Activated T-helper 2 cell treated with anti-CD3 and anti-CD28 coated beads, Interferon-gamma antibody, Interleukin-2, Interleukin-4, amounts not matched to agents 10 μg/mL and 5 μg/mL and 100 μg/mL, durations not matched to agents 14 hours and 24 hours and 36 hours (primary cell): ENCODE measurements at regions of chr4 and their contacts with region 1.

Region 1: GRCh38 chr4:142416711-142417275 is 429.3 kb downstream of the INPP4B start:
- DNase-seq: no peak
- H3K4me3 Mint-ChIP-seq: peak overlapping the region; percentile 76
- H3K27ac Mint-ChIP-seq: peak overlapping the region; percentile 98
- H3K4me1 Mint-ChIP-seq: peaks cover 49% of the 10 kb centered on the region
- H3K27me3 Mint-ChIP-seq: no peaks in the 10 kb centered on the region

Region 2: GRCh38 chr4:142282870-142283431 is 133.8 kb before region 1 on chr4:
- intact Hi-C with region 1: loop called (anchors 5 kb)
- DNase-seq: no peak
- H3K4me3 Mint-ChIP-seq: no peak overlapping the region
- H3K27ac Mint-ChIP-seq: no peak overlapping the region
- H3K4me1 Mint-ChIP-seq: peaks cover 15% of the 10 kb centered on the region
- H3K27me3 Mint-ChIP-seq: no peaks in the 10 kb centered on the region

Region 3: DNA sequence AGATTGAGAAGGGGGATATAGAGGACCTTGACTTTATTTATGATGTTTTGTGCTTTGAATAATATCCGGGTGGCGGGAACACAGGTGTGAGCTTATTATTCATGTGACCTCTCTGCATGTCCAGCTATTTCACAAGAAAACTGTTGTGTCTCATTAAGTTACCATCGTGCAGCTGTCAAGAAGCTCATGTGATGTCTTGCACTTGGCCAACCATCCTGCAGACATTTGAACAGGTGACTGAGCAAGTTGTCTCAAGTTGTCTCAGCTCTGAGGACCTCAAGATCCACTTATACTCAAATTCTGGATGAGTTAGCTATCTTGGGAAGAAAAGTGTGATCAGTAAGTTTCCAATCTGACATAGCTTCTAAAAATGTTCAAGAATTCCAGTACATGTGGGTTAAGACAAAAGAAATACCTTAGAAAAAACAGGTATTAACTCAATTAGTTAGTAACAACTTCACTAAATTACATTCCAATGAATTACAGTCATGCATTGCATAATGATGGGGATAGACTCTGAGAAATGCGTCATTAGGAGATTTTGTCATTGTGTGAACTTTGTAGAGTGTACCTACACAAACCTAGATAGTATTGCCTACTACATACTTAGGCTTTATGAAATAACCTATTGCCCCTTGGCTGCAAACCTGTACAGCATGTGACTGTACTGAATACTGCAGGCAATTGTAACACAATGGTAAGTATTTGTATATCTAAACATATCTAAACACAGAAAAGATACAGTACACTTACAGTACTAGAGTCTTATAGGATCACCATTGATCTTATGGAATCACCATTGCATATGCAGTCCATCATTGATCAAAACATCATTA is 32.8 kb before region 1 on chr4:
- intact Hi-C with region 1: no loop called
- DNase-seq: no peak
- H3K4me3 Mint-ChIP-seq: no peak overlapping the region
- H3K27ac Mint-ChIP-seq: peak overlapping the region; percentile 65
- H3K4me1 Mint-ChIP-seq: peaks cover 60% of the 10 kb centered on the region
- H3K27me3 Mint-ChIP-seq: no peaks in the 10 kb centered on the region

Region 4: GRCh38 chr4:142452161-142452855 is 35.5 kb after region 1 on chr4:
- intact Hi-C with region 1: no loop called
- DNase-seq: no peak
- H3K4me3 Mint-ChIP-seq: no peak overlapping the region
- H3K27ac Mint-ChIP-seq: no peak overlapping the region
- H3K4me1 Mint-ChIP-seq: peaks cover 13% of the 10 kb centered on the region
- H3K27me3 Mint-ChIP-seq: no peaks in the 10 kb centered on the region

Region 5: DNA sequence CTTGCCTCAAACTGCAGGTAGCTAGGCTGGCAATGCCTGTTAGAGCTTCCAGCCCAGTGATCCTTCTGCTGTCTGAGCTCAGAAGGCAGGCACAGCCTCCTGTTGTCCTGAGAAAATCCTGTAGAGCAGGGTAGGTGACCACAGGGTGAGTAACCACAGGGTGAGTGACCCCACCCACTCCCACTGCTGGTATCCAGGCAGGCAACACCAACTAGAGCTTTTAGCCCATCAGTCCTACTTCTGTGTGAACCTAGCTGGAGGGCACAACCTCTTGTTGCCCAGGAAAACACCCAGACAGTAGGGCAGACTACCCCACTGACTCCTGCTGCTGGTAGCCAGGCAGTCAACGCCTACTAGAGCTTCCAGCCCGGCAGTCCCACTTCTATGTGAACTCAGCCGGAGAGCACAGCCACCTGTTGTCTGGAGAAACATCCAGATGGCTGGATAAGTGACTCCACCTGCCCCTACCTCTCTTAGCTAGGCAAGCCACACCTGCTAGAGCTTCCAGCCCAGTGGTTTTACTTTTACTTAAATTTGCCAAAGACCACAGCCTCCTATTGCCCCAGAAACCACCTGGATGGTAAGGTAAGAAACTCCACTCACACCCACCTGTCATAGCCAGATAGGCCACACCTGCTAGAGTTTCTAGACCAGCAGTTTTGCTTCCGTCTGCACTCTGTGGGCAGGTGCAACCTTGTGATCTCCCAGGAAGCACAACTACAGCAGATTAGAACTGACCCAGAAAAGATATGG is 57.7 kb after region 1 on chr4:
- intact Hi-C with region 1: loop called (anchors 2 kb)
- DNase-seq: no peak
- H3K4me3 Mint-ChIP-seq: no peak overlapping the region
- H3K27ac Mint-ChIP-seq: no peak overlapping the region
- H3K4me1 Mint-ChIP-seq: peaks cover 23% of the 10 kb centered on the region
- H3K27me3 Mint-ChIP-seq: no peaks in the 10 kb centered on the region